ENCODE measurements at regions of chr1 and their contacts with region 1.

Region 1: GRCh38 chr1:3618881-3619671 is 5.7 kb upstream of the TPRG1L start:
- DNase-seq: peak; percentile 95
- H3K4me3 ChIP-seq: no peak overlapping the region
- H3K27ac ChIP-seq: no peak overlapping the region
- H3K4me1 ChIP-seq: peaks cover 13 to 38% (median 34%) of the 10 kb centered on the region in 4 donors
- H3K27me3 ChIP-seq: peaks cover 0 to 12% (median 0%) of the 10 kb centered on the region in 4 donors
- CTCF ChIP-seq: peak; percentile 80 to 88 (median 86)
- EP300 ChIP-seq: no peak
- POLR2A ChIP-seq: no peak

Region 2: GRCh38 chr1:3491291-3492246 is 127.5 kb before region 1 on chr1:
- intact Hi-C with region 1: loop called (anchors 2 kb)
- DNase-seq: no peak
- H3K4me3 ChIP-seq: peak overlapping the region in 2 of 4 donors; percentile 1 to 4
- H3K27ac ChIP-seq: no peak overlapping the region
- H3K4me1 ChIP-seq: peaks cover 0 to 12% (median 10%) of the 10 kb centered on the region in 4 donors
- H3K27me3 ChIP-seq: peaks cover 0 to 35% (median 0%) of the 10 kb centered on the region in 4 donors
- CTCF ChIP-seq: peak in 2 of 3 experiments; percentile 96 to 100
- EP300 ChIP-seq: no peak
- POLR2A ChIP-seq: no peak

Region 3: GRCh38 chr1:3564921-3565827 is 53.9 kb before region 1 on chr1:
- intact Hi-C with region 1: loop called (anchors 5 kb)
- DNase-seq: no peak
- H3K4me3 ChIP-seq: no peak overlapping the region
- H3K27ac ChIP-seq: no peak overlapping the region
- H3K4me1 ChIP-seq: peaks cover 0 to 12% (median 8%) of the 10 kb centered on the region in 4 donors
- H3K27me3 ChIP-seq: peaks cover 0 to 21% (median 0%) of the 10 kb centered on the region in 4 donors
- CTCF ChIP-seq: peak; percentile 69 to 87 (median 70)
- EP300 ChIP-seq: no peak
- POLR2A ChIP-seq: no peak

Measured in esophagus muscularis mucosa (tissue), 4 donors.